ENCODE measurements at regions of chr6 and their contacts with region 1.

Region 1: GRCh38 chr6:106979427-106979884 is 4.9 kb upstream of the CD24 start:
- DNase-seq: peak; percentile 82
- H3K4me3 ChIP-seq: peak overlapping the region in 1 of 2 experiments; percentile 24; a peak in 1 of 4 replicates
- H3K27ac ChIP-seq: no peak overlapping the region
- H3K4me1 ChIP-seq: no peaks in the 10 kb centered on the region; a peak in 1 of 4 replicates
- H3K27me3 ChIP-seq: peaks cover 30% of the 10 kb centered on the region; the same call in 1 of the 2 replicates
- CTCF ChIP-seq: peak; percentile 96
- EP300 ChIP-seq: no peak
- RAD21 ChIP-seq: peak; percentile 99

Region 2: DNA sequence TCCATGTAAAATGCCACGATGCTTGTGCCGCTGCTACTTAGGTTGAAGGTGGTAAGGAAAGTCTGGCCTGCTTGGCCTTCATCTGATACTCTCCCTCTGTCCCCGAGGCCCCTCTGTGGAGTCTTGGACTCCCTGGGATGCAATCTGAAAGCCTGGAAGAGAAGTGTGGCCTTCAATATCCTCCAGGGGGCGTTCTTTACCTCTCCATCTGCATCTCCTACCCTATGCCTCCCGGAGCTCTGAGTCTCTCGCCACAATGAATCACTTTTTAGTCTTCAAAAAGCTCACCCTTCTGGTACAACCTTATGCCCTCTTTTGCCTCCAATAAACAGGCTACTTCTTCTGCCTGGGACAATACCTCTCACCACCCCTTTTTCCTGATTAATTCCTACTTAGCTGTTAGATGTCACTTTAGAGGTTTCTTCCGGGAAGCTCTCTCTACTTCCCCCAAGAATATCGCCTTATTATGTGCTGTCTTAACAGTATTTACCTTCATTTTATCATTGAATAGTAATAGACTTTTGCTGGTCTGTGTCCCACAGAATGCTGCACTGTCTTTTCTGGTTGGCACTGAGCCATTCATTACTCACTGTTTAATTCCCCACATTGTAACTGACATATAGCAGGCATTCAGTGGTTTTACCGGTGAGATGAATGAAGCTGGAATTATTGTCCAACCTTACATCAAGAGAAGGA is 640.0 kb before region 1 on chr6:
- CTCF ChIA-PET with region 1: interaction called, 12 read pairs
- POLR2A ChIA-PET with region 1: interaction called, 3 read pairs
- DNase-seq: peak; percentile 75
- H3K4me3 ChIP-seq: peak overlapping the region; percentile 16 to 27; a peak in 3 of 4 replicates
- H3K27ac ChIP-seq: peak overlapping the region in 1 of 2 experiments; percentile 35; a peak in 1 of 4 replicates
- H3K4me1 ChIP-seq: peaks cover 0 to 2% of the 10 kb centered on the region in 2 experiments; a peak in 2 of 4 replicates
- H3K27me3 ChIP-seq: no peaks in the 10 kb centered on the region
- CTCF ChIP-seq: peak; percentile 90
- EP300 ChIP-seq: no peak
- RAD21 ChIP-seq: peak; percentile 75

Region 3: DNA sequence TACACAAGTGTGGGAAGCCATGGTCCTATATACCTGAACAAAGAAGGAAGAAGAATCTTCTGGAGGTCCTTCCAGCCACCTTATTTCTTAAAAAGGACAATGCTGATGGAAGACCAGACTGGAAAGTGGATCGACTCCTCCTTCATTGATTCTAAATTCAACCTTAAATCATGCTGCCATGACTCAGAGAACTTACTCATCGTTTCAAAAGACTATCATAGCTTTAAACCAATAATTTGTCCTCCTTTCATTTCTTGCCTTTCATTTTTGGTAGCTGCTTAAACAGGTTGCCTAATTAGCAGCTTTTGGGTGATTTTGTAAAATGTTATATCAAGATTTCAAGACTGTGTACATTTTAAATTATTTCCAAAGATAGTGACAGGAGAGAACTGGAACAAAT is 410.9 kb before region 1 on chr6:
- CTCF ChIA-PET with region 1: interaction called, 85 read pairs
- POLR2A ChIA-PET with region 1: no interaction called
- DNase-seq: no peak
- H3K4me3 ChIP-seq: no peak overlapping the region
- H3K27ac ChIP-seq: no peak overlapping the region
- H3K4me1 ChIP-seq: peaks cover 0 to 9% of the 10 kb centered on the region in 2 experiments; a peak in 2 of 4 replicates
- H3K27me3 ChIP-seq: no peaks in the 10 kb centered on the region
- CTCF ChIP-seq: no peak
- EP300 ChIP-seq: no peak
- RAD21 ChIP-seq: no peak

Region 4: DNA sequence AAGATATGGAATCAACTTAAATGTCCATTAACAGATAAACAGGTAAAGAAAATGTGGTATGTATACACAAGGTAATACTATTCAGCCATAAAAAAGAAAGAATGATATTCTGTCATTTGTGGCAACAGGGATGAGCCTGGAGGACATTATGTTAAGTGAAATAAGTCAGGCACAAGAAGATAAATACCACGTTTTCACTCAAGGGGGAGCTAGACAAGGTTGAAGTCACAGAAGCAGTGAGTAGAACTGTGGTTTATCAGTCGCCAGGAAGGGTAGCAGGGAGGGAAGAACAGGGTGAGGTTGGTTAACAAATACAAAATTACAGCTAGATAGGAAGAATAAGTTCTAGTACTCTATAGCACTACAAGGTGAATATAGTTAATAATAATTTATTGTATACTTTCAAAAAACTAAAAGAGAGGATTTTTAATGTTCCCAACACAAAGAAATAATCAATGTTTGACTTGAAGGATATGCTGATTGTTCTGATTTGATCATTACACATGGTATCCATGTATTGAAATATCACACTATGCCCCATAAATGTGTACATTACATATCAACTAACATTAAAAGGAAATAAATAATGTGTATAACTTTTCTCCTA is 371.3 kb before region 1 on chr6:
- CTCF ChIA-PET with region 1: interaction called, 90 read pairs
- POLR2A ChIA-PET with region 1: interaction called, 6 read pairs
- DNase-seq: peak; percentile 51
- H3K4me3 ChIP-seq: no peak overlapping the region
- H3K27ac ChIP-seq: no peak overlapping the region
- H3K4me1 ChIP-seq: no peaks in the 10 kb centered on the region
- H3K27me3 ChIP-seq: no peaks in the 10 kb centered on the region
- CTCF ChIP-seq: peak; percentile 61
- EP300 ChIP-seq: no peak
- RAD21 ChIP-seq: peak; percentile 61

Region 5: GRCh38 chr6:106620931-106621672 is 358.4 kb before region 1 on chr6:
- CTCF ChIA-PET with region 1: interaction called, 24 read pairs
- POLR2A ChIA-PET with region 1: no interaction called
- DNase-seq: no peak
- H3K4me3 ChIP-seq: no peak overlapping the region
- H3K27ac ChIP-seq: 0 out of 4 replicates have a peak overlapping the region, but pooled peaks of 1 of the 2 experiments have one; percentile 3
- H3K4me1 ChIP-seq: no peaks in the 10 kb centered on the region; a peak in 1 of 4 replicates
- H3K27me3 ChIP-seq: no peaks in the 10 kb centered on the region
- CTCF ChIP-seq: no peak
- EP300 ChIP-seq: no peak
- RAD21 ChIP-seq: no peak

Region 6: GRCh38 chr6:107075951-107076381 is 96.5 kb after region 1 on chr6:
- CTCF ChIA-PET with region 1: no interaction called
- POLR2A ChIA-PET with region 1: no interaction called
- DNase-seq: no peak
- H3K4me3 ChIP-seq: no peak overlapping the region
- H3K27ac ChIP-seq: 0 out of 4 replicates have a peak overlapping the region, but pooled peaks of 1 of the 2 experiments have one; percentile 3
- H3K4me1 ChIP-seq: peaks cover 0 to 10% of the 10 kb centered on the region in 2 experiments; a peak in 1 of 4 replicates
- H3K27me3 ChIP-seq: no peaks in the 10 kb centered on the region
- CTCF ChIP-seq: peak; percentile 50
- EP300 ChIP-seq: peak in 1 of 2 experiments; percentile 19; a peak in 1 of 4 replicates
- RAD21 ChIP-seq: peak; percentile 55

Region 7: GRCh38 chr6:107345393-107345792 is 365.9 kb after region 1 on chr6:
- CTCF ChIA-PET with region 1: no interaction called
- POLR2A ChIA-PET with region 1: no interaction called
- DNase-seq: no peak
- H3K4me3 ChIP-seq: no peak overlapping the region
- H3K27ac ChIP-seq: no peak overlapping the region
- H3K4me1 ChIP-seq: peaks cover 0 to 3% of the 10 kb centered on the region in 2 experiments; a peak in 2 of 4 replicates
- H3K27me3 ChIP-seq: no peaks in the 10 kb centered on the region
- CTCF ChIP-seq: no peak
- EP300 ChIP-seq: no peak
- RAD21 ChIP-seq: no peak

Measured in SK-N-SH (cell line).